ENCODE measurements at regions of chr7 and their contacts with region 1.

Region 1: GRCh38 chr7:128135515-128136214 is 104.4 kb upstream of the LRRC4 start:
- H3K4me3 Mint-ChIP-seq: peak overlapping the region; percentile 73
- H3K27ac Mint-ChIP-seq: no peak overlapping the region
- H3K4me1 Mint-ChIP-seq: peaks cover 39% of the 10 kb centered on the region
- H3K27me3 Mint-ChIP-seq: peaks cover 61% of the 10 kb centered on the region

Region 2: DNA sequence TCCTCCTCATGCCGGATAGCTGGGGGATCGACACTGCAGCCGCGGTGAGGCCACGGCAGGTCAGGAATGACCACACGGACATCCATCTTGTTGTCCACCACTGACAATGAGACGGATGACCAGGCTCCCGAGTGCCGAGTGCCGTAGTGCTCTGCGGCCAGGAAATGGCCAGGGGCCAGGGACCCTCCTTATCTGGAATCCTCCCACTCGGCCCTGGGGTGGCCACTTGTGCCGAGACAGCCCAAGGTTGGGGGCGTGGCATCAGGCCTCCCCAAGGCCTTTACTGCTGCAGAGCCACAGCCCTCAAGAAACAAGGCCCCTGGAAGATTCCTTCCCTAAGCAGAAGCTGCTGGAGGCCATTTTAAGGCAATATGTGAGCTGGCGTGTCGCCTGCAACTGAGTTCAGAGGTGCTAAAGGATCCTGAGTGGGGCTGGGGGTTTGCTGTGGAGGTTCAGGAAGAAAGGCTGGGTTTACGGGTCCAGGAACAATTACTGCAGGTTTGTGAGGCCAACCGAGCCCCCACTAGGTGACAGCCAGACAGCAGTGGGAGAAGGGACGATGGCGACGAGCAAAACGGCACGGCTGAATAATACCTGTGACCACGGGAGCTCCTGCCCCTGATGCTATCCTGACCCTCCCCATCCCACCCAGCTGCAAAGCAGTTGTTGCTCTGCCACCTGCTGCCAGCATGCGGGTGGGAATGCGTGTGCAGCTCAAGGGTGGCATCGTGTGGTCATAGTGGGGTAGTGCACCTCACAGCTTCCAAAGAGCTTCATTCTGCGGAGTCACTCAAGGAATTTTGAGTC is 73.8 kb after region 1 on chr7:
- intact Hi-C with region 1: loop called (anchors 1 kb)
- H3K4me3 Mint-ChIP-seq: no peak overlapping the region
- H3K27ac Mint-ChIP-seq: peak overlapping the region; percentile 18
- H3K4me1 Mint-ChIP-seq: peaks cover 9% of the 10 kb centered on the region
- H3K27me3 Mint-ChIP-seq: peaks cover 26% of the 10 kb centered on the region

Measured in dendritic cell treated with granulocyte-macrophage colony-stimulating factor and Interleukin-4, amounts not matched to agents 40 ng/mL and 50 ng/mL, for 4 days (primary cell).